WTC11 (cell line): ENCODE measurements at regions of chr19 and their contacts with region 1.

Region 1: DNA sequence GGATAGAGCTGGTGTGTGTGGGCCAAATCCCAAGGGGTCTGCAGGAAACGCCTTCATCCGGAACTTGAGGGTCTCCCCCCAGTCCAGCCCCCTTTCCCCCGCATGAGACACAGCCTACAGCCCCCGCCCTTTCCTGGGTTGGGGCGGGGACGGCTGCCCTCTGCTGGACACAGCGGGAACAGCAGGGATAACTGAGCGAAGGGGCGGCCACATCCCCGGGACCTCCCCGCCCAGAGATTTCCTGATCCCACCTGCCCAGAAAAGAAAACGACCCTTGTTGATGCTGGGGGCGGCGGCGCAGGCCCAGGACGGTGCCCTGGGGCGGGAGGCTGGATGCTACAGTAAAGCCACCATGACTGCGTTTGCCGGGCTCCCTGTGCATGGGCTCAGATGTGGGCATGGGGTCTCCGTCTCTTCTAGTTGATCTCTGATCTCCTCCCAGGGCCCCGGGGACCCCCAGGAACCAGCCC is 14.2 kb downstream of the ONECUT3 start:
- DNase-seq: peak; percentile 79
- ATAC-seq: peak; percentile 59
- H3K4me3 Mint-ChIP-seq: no peak overlapping the region
- H3K27ac Mint-ChIP-seq: no peak overlapping the region
- H3K4me1 Mint-ChIP-seq: peaks cover 11% of the 10 kb centered on the region
- H3K27me3 Mint-ChIP-seq: peaks cover 99% of the 10 kb centered on the region
- CTCF ChIP-seq: peak; percentile 96

Region 2: DNA sequence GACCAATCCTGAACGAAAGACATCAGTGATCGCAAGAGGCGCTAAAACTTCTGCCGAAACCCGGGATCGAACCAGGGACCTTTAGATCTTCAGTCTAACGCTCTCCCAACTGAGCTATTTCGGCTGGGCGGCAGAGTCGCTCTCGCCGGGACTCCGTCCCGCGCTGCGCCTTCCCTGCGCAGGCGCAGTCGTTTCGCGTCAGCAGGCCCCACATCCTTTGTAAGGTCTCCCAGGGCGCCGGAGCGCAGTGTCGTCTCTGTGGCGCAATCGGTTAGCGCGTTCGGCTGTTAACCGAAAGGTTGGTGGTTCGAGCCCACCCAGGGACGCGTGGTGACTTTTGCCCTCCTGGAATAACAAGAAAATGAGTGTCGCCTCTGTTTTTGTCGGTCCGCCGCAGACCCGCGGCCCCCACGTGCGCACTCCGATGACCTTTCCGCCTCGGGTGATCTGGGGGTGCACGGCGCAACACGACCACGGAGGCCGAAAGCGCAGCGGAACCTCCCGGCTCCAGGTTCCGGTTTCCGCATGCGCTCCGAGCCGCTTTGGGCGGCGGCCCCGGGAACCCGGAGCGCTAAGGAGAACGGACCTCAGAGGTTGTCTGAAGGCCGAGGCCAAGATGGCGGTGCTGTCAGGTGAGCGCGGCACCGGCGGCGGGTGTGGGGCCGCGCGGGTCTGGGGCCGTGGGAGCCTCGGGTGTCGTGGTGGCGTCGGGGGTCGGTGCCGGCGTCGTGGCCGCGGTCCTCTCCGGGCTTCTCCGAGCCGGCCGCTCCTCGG is 384.0 kb before region 1 on chr19 and contains the start of gene NDUFS7:
- CTCF ChIA-PET with region 1: no interaction called
- POLR2A ChIA-PET with region 1: no interaction called
- DNase-seq: peak; percentile 87
- ATAC-seq: peak; percentile 71
- H3K4me3 Mint-ChIP-seq: peak within 1 kb of the TSS; percentile 81
- H3K27ac Mint-ChIP-seq: peak within 1 kb of the TSS; percentile 51
- H3K4me1 Mint-ChIP-seq: peaks cover 14% of the 10 kb centered on the region
- H3K27me3 Mint-ChIP-seq: peaks cover 4% of the 10 kb centered on the region
- CTCF ChIP-seq: no peak
- total RNA-seq, gene NDUFS7: 136 to 149 TPM (median 139 TPM) in 3 replicates

Region 3: GRCh38 chr19:1592755-1593500 is 174.6 kb before region 1 on chr19 and contains the start of gene MBD3:
- CTCF ChIA-PET with region 1: interaction called, 11 read pairs
- POLR2A ChIA-PET with region 1: no interaction called
- DNase-seq: peak; percentile 90
- ATAC-seq: peak; percentile 88
- H3K4me3 Mint-ChIP-seq: peak within 1 kb of the TSS; percentile 85
- H3K27ac Mint-ChIP-seq: peak within 1 kb of the TSS; percentile 93
- H3K4me1 Mint-ChIP-seq: peaks cover 10% of the 10 kb centered on the region
- H3K27me3 Mint-ChIP-seq: no peaks in the 10 kb centered on the region
- CTCF ChIP-seq: no peak
- total RNA-seq, gene MBD3: 90.2 to 94.8 TPM (median 93.2 TPM) in 3 replicates

Region 4: GRCh38 chr19:1672038-1672768 is 95.3 kb before region 1 on chr19:
- CTCF ChIA-PET with region 1: interaction called, 85 read pairs
- POLR2A ChIA-PET with region 1: no interaction called
- DNase-seq: peak; percentile 62
- ATAC-seq: peak; percentile 24
- H3K4me3 Mint-ChIP-seq: peak overlapping the region; percentile 41
- H3K27ac Mint-ChIP-seq: no peak overlapping the region
- H3K4me1 Mint-ChIP-seq: peaks cover 18% of the 10 kb centered on the region
- H3K27me3 Mint-ChIP-seq: peaks cover 90% of the 10 kb centered on the region
- CTCF ChIP-seq: peak; percentile 84

Region 5: DNA sequence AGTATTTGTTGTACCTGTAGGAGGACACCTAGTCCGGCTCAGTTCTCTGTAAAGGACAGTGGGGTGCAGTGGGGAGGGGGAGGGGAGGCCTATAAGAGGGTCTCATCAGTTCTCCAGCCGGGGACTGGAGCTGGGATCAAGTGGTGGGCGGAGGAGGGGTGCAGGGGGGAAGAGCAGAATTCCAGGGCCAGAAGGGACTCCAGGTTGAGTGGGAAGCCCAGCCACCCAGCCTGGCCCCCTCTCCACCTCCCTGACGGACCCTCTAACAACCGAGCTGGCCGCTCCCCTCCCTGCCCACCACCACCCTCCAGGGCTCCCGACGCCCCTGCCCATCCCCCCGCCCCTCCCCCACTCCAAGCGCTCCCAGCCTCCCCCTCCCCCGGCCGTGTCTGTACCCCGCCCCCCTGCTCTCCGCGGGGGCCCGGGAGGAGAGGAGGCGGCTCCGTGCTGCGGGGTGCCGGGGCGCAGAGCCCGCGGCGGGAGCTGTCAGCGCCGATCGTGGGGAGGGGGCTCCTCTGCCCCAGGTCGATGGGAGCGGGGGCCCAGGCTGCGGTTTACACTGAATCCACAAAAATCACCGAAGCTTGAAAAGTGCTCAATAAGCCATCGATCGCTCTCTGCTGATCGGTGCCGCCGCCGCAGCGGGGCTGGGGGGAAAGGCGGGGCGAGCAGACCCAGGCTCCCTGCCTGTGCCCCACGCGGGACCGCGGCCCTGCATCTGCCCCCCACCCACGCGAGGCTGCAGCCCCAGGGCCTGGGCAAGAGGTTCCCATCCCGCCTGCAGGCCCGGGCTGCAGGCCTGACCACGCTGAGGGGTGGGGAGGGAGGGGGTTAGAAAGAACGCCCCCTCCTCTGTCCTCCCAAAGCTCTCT is 48.8 kb before region 1 on chr19:
- CTCF ChIA-PET with region 1: interaction called, 11 read pairs
- POLR2A ChIA-PET with region 1: no interaction called
- DNase-seq: no peak
- ATAC-seq: peak; percentile 34
- H3K4me3 Mint-ChIP-seq: peak overlapping the region; percentile 51; the same call in 1 of the 2 replicates
- H3K27ac Mint-ChIP-seq: no peak overlapping the region
- H3K4me1 Mint-ChIP-seq: peaks cover 5% of the 10 kb centered on the region
- H3K27me3 Mint-ChIP-seq: peaks cover 54% of the 10 kb centered on the region
- CTCF ChIP-seq: no peak

Region 6: GRCh38 chr19:1754616-1755466 is 12.7 kb before region 1 on chr19:
- CTCF ChIA-PET with region 1: interaction called, 22 read pairs
- POLR2A ChIA-PET with region 1: no interaction called
- DNase-seq: no peak
- ATAC-seq: peak; percentile 5; the same call in 1 of the 2 replicates
- H3K4me3 Mint-ChIP-seq: peak overlapping the region; percentile 36; the same call in 1 of the 2 replicates
- H3K27ac Mint-ChIP-seq: no peak overlapping the region
- H3K4me1 Mint-ChIP-seq: peaks cover 11% of the 10 kb centered on the region
- H3K27me3 Mint-ChIP-seq: peaks cover 91% of the 10 kb centered on the region
- CTCF ChIP-seq: no peak

Region 7: DNA sequence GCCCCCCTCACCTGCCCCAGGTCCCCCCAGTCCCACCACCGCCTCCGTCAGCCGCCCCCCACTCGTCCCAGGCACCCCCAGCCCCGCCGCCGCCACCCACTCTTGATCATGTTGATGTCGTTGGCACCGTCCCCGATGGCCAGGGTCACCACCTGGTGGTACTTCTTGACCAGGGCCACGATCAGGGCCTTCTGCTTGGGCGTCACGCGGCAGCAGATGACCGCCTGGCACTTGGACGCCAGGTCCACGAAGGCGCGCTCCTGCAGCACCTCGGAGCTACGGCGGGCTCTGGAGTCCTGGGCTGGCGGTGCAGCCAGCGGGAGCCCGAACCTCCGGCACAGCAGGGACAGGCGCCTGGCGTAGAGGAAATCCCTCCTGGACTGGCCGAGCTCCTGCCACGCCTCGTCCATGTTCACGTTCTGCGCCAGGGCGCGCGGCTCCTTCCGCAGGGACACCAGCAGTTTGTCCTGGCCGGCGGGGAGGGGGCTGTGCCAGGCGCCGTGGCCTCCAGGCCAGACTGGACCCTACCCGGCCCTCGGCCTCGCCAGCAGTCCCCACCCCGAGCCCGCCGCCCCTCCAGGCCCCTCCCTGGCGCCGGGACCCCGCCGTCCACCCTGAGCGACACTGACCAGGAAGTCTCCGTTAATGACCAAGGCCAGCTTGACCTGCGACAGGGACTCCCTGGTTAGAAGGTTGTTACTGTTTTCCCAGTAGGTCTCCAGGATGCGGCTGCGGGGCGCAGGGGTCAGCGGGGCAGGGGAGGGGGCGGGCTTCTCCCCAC is 22.0 kb after region 1 on chr19:
- CTCF ChIA-PET with region 1: interaction called, 161 read pairs
- POLR2A ChIA-PET with region 1: interaction called, 11 read pairs
- DNase-seq: no peak
- ATAC-seq: no peak
- H3K4me3 Mint-ChIP-seq: peak overlapping the region; percentile 48; the same call in 1 of the 2 replicates
- H3K27ac Mint-ChIP-seq: no peak overlapping the region
- H3K4me1 Mint-ChIP-seq: peaks cover 5% of the 10 kb centered on the region
- H3K27me3 Mint-ChIP-seq: peaks cover 29% of the 10 kb centered on the region
- CTCF ChIP-seq: no peak

Region 8: GRCh38 chr19:1913781-1914577 is 146.5 kb after region 1 on chr19:
- CTCF ChIA-PET with region 1: no interaction called
- POLR2A ChIA-PET with region 1: no interaction called
- DNase-seq: no peak
- ATAC-seq: no peak
- H3K4me3 Mint-ChIP-seq: no peak overlapping the region
- H3K27ac Mint-ChIP-seq: 0 out of 2 replicates have a peak overlapping the region, but pooled peaks have one; percentile 41
- H3K4me1 Mint-ChIP-seq: no peaks in the 10 kb centered on the region
- H3K27me3 Mint-ChIP-seq: no peaks in the 10 kb centered on the region
- CTCF ChIP-seq: no peak